ENCODE measurements at regions of chr11 and their contacts with region 1.

Region 1: DNA sequence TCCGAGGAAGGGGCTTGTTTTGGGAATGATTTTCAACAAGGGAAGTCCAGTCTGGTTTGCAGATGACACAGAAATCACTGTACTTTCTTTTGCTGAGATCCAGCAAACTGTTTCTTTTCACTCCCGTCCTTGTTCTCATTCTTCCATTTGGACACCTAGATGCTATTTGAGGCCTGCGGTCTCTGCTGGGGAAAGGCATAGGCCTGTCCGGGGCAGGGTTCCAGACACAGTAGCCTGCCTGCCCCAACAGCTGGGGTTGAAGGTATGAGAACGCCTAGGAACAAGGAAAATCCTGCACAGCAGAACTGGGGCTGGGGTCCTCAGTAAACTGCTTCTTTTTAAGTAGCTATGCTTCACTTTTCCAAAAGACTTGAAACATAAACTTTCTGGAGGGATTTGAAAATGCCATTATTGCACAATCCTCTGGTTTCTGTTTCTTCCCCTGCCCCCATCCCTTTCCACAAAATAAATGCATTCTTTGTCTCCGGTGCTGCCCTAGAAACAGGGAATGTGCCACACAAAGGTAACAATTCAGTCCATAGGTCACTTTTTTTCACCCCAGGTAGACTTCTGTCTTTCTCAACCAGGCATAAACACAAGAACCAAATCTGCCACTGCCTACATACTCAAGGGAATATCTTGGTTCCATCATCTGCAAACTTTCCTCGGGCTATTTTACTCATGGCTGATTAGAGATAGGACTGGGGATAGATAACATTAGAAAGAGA is 174.8 kb upstream of the MTMR2 start:
- DNase-seq: peak; percentile 90 to 91
- H3K4me3 ChIP-seq: no peak overlapping the region
- H3K4me3 Mint-ChIP-seq: peak overlapping the region; percentile 65
- H3K27ac Mint-ChIP-seq: peak overlapping the region; percentile 94
- H3K4me1 ChIP-seq: peaks cover 75% of the 10 kb centered on the region
- H3K4me1 Mint-ChIP-seq: peaks cover 71% of the 10 kb centered on the region
- H3K27me3 ChIP-seq: no peaks in the 10 kb centered on the region
- H3K27me3 Mint-ChIP-seq: no peaks in the 10 kb centered on the region
- CTCF ChIP-seq: no peak

Region 2: GRCh38 chr11:95923728-95924413 is 174.8 kb before region 1 on chr11 and contains the start of gene MTMR2:
- CTCF ChIA-PET with region 1: no interaction called
- POLR2A ChIA-PET with region 1: interaction called, 3 read pairs
- intact Hi-C with region 1: loop called (anchors 5 kb)
- DNase-seq: peak; percentile 88 to 91
- H3K4me3 ChIP-seq: peak within 1 kb of the TSS; percentile 84
- H3K4me3 Mint-ChIP-seq: peak within 1 kb of the TSS; percentile 88
- H3K27ac Mint-ChIP-seq: peak within 1 kb of the TSS; percentile 96
- H3K4me1 ChIP-seq: peaks cover 6% of the 10 kb centered on the region
- H3K4me1 Mint-ChIP-seq: peaks cover 13% of the 10 kb centered on the region
- H3K27me3 ChIP-seq: no peaks in the 10 kb centered on the region
- H3K27me3 Mint-ChIP-seq: no peaks in the 10 kb centered on the region
- CTCF ChIP-seq: peak in 1 of 2 experiments; percentile 14
- total RNA-seq, gene MTMR2: 75.2 and 76.4 TPM in 2 replicates

Region 3: GRCh38 chr11:96122601-96123074 is 24.0 kb after region 1 on chr11:
- CTCF ChIA-PET with region 1: no interaction called
- POLR2A ChIA-PET with region 1: no interaction called
- intact Hi-C with region 1: loop called (anchors 2 kb)
- DNase-seq: no peak
- H3K4me3 ChIP-seq: no peak overlapping the region
- H3K4me3 Mint-ChIP-seq: no peak overlapping the region
- H3K27ac Mint-ChIP-seq: no peak overlapping the region
- H3K4me1 ChIP-seq: no peaks in the 10 kb centered on the region
- H3K4me1 Mint-ChIP-seq: peaks cover 28% of the 10 kb centered on the region
- H3K27me3 ChIP-seq: no peaks in the 10 kb centered on the region
- H3K27me3 Mint-ChIP-seq: no peaks in the 10 kb centered on the region
- CTCF ChIP-seq: no peak

Region 4: GRCh38 chr11:96199563-96200025 is 100.9 kb after region 1 on chr11:
- CTCF ChIA-PET with region 1: no interaction called
- POLR2A ChIA-PET with region 1: no interaction called
- intact Hi-C with region 1: loop called (anchors 1 kb)
- DNase-seq: no peak
- H3K4me3 ChIP-seq: no peak overlapping the region
- H3K4me3 Mint-ChIP-seq: no peak overlapping the region
- H3K27ac Mint-ChIP-seq: peak overlapping the region; percentile 90
- H3K4me1 ChIP-seq: peaks cover 30% of the 10 kb centered on the region
- H3K4me1 Mint-ChIP-seq: peaks cover 31% of the 10 kb centered on the region
- H3K27me3 ChIP-seq: no peaks in the 10 kb centered on the region
- H3K27me3 Mint-ChIP-seq: no peaks in the 10 kb centered on the region
- CTCF ChIP-seq: no peak

Region 5: GRCh38 chr11:96272529-96273222 is 174.0 kb after region 1 on chr11:
- CTCF ChIA-PET with region 1: no interaction called
- POLR2A ChIA-PET with region 1: no interaction called
- intact Hi-C with region 1: loop called (anchors 1 kb)
- DNase-seq: peak in 1 of 2 experiments; percentile 77
- H3K4me3 ChIP-seq: peak overlapping the region; percentile 4; the same call in 1 of the 2 replicates
- H3K4me3 Mint-ChIP-seq: peak overlapping the region; percentile 70
- H3K27ac Mint-ChIP-seq: peak overlapping the region; percentile 96
- H3K4me1 ChIP-seq: peaks cover 46% of the 10 kb centered on the region
- H3K4me1 Mint-ChIP-seq: peaks cover 37% of the 10 kb centered on the region
- H3K27me3 ChIP-seq: no peaks in the 10 kb centered on the region
- H3K27me3 Mint-ChIP-seq: no peaks in the 10 kb centered on the region
- CTCF ChIP-seq: no peak

Region 6: DNA sequence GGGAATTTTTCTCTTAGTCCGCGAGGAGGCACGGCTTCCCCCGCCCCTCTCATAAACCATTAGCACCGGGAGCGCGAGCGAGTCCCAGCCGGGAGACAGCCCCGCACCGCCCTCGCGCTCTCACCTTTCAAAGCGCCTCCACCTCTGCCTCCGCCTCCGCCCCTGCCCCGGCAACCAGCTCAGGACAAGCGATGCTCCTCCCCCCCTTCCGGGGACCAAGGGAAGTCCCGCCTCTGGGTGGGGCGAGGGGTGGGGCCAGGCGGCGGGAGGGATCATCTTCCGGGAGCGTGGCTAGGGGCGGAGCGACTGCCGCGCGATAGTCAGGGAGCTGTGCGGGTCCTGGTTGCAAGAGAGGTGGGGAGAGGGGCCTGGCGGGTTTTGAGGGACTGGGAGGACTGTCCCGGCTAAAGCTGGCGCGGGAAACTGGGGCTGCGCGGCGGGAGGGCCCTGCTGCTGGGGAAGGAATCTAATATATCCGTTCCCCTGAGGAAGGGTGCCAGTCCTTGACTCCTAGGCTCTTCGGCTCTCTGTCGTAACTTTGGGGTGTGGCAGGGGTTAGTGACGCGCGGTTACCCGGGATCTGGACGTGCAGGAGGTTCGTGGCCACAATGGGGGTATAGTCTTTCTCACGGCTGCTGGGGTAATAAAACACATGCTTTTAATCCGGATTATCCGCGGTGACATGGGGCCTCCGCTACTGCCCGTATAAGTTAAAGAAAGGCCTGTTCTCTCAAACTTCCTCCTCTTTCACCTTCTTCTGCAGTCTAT is 291.2 kb after region 1 on chr11 and contains the starts of genes CCDC82 and JRKL:
- CTCF ChIA-PET with region 1: no interaction called
- POLR2A ChIA-PET with region 1: interaction called, 3 read pairs
- intact Hi-C with region 1: loop called (anchors 2 kb)
- DNase-seq: peak; percentile 99 to 100
- H3K4me3 ChIP-seq: peak within 1 kb of the TSS; percentile 82
- H3K4me3 Mint-ChIP-seq: peak within 1 kb of the TSS; percentile 82
- H3K27ac Mint-ChIP-seq: peak within 1 kb of the TSS; percentile 88
- H3K4me1 ChIP-seq: peaks cover 28% of the 10 kb centered on the region
- H3K4me1 Mint-ChIP-seq: peaks cover 19% of the 10 kb centered on the region
- H3K27me3 ChIP-seq: no peaks in the 10 kb centered on the region
- H3K27me3 Mint-ChIP-seq: no peaks in the 10 kb centered on the region
- CTCF ChIP-seq: no peak
- total RNA-seq, gene CCDC82: 38.2 TPM in 2 replicates
- total RNA-seq, gene JRKL: 16.6 and 17.4 TPM in 2 replicates